Panc1 (cell line): ENCODE measurements at regions of chr7 and their contacts with region 1.

Region 1: GRCh38 chr7:131769226-131769625 is 212.8 kb upstream of the PODXL start:
- DNase-seq: no peak
- ATAC-seq: no peak
- H3K4me3 ChIP-seq: no peak overlapping the region
- H3K27ac ChIP-seq: no peak overlapping the region
- H3K4me1 ChIP-seq: no peaks in the 10 kb centered on the region
- H3K27me3 ChIP-seq: no peaks in the 10 kb centered on the region; the same call in none of the 2 replicates
- CTCF ChIP-seq: no peak

Region 2: DNA sequence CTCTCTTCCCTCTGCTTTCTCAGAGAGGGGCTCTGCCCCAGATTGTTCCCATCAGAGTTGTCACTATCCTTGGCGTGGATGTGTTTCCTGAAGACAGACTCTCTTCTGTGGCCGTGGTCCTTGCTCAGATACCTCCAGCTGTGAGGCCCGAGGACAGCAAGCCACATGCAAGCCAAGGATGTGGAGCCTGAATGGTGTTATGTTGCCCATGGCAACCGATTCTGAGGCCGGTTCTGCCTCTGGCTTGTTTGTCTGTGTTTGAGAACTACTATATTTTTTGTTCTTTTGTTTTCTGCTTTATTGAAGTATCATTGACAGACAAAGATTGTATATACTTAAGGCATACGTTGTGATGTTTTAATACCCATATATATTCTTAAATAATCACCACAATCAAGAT is 34.6 kb after region 1 on chr7:
- CTCF ChIA-PET with region 1: no interaction called
- POLR2A ChIA-PET with region 1: interaction called, 18 read pairs
- in situ Hi-C with region 1: no loop called
- intact Hi-C with region 1: no loop called
- DNase-seq: no peak
- ATAC-seq: no peak
- H3K4me3 ChIP-seq: no peak overlapping the region
- H3K27ac ChIP-seq: no peak overlapping the region
- H3K4me1 ChIP-seq: no peaks in the 10 kb centered on the region
- H3K27me3 ChIP-seq: peaks cover 9% of the 10 kb centered on the region; the same call in 1 of the 2 replicates
- CTCF ChIP-seq: no peak